CD4-positive, alpha-beta T cell (primary cell): ENCODE measurements at regions of chr1 and their contacts with region 1.

Region 1: GRCh38 chr1:111619635-111620440 is at the start of gene RAP1A:
- DNase-seq: peak; percentile 88 to 98 (median 95)
- ATAC-seq: peak; percentile 75
- H3K4me3 ChIP-seq: peak within 1 kb of the TSS; percentile 81
- H3K4me3 Mint-ChIP-seq: peak within 1 kb of the TSS; percentile 98
- H3K27ac ChIP-seq: peak within 1 kb of the TSS; percentile 76 to 90
- H3K27ac Mint-ChIP-seq: peak within 1 kb of the TSS; percentile 95
- H3K4me1 ChIP-seq: peaks cover 60% of the 10 kb centered on the region
- H3K4me1 Mint-ChIP-seq: peaks cover 82% of the 10 kb centered on the region
- H3K27me3 ChIP-seq: no peaks in the 10 kb centered on the region
- H3K27me3 Mint-ChIP-seq: no peaks in the 10 kb centered on the region
- CTCF ChIP-seq: no peak
- total RNA-seq, gene RAP1A: 63.8 to 67.1 TPM

Region 2: DNA sequence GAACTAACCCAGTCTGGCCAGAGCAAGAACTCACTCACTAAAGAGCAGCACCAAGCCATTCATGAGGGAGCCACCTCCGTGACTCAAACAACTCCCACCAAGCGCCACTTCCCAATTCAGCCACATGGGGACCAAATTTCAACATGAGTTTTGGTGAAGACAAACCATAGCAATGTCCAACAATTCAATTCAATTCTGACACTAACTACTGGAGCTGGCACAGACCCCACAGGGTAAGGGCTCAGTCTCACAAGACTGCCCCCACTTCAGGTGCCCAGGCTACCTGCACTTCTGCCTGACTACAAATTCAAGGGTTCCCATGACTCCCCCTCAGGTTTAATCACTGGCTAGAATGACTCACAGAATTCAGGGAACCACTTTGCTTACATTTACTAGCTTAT is 49.1 kb before region 1 on chr1:
- CTCF ChIA-PET with region 1: no interaction called
- POLR2A ChIA-PET with region 1: no interaction called
- intact Hi-C with region 1: loop called in 1 of 2 experiments (anchors 10 kb)
- DNase-seq: peak; percentile 6 to 64 (median 22)
- ATAC-seq: peak; percentile 64
- H3K4me3 ChIP-seq: no peak overlapping the region
- H3K4me3 Mint-ChIP-seq: no peak overlapping the region
- H3K27ac ChIP-seq: no peak overlapping the region
- H3K27ac Mint-ChIP-seq: no peak overlapping the region
- H3K4me1 ChIP-seq: peaks cover 4% of the 10 kb centered on the region
- H3K4me1 Mint-ChIP-seq: peaks cover 9% of the 10 kb centered on the region
- H3K27me3 ChIP-seq: no peaks in the 10 kb centered on the region
- H3K27me3 Mint-ChIP-seq: no peaks in the 10 kb centered on the region
- CTCF ChIP-seq: peak; percentile 42

Region 3: DNA sequence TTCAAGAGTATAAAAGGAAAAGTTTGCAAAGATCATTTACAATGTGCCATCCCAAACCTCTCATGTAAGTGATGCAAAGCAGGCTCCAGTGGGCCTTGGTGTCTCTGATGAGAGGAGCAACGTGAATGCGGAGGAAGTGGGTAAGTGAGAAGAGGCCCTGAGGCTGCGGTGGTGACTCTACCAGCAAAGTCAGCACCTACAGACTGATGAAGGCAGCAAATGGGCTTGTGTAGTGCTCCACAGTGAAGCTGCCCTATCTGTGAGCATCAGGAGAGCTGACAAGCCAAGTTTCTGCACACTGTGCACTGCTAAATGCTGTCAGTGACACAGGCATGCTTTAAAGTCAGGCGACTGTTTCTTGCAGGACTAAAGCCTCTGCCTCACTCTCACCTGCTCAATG is 15.9 kb before region 1 on chr1:
- CTCF ChIA-PET with region 1: interaction called, 12 read pairs
- POLR2A ChIA-PET with region 1: interaction called, 116 read pairs
- intact Hi-C with region 1: loop called in 1 of 2 experiments (anchors 2 kb)
- DNase-seq: peak; percentile 63 to 91 (median 76)
- ATAC-seq: peak; percentile 98
- H3K4me3 ChIP-seq: no peak overlapping the region
- H3K4me3 Mint-ChIP-seq: peak overlapping the region; percentile 37
- H3K27ac ChIP-seq: peak overlapping the region; percentile 30 to 63
- H3K27ac Mint-ChIP-seq: peak overlapping the region; percentile 84
- H3K4me1 ChIP-seq: peaks cover 74% of the 10 kb centered on the region
- H3K4me1 Mint-ChIP-seq: peaks cover 76% of the 10 kb centered on the region
- H3K27me3 ChIP-seq: no peaks in the 10 kb centered on the region
- H3K27me3 Mint-ChIP-seq: no peaks in the 10 kb centered on the region
- CTCF ChIP-seq: no peak

Region 4: GRCh38 chr1:111656086-111657017 is 36.5 kb after region 1 on chr1:
- CTCF ChIA-PET with region 1: no interaction called
- POLR2A ChIA-PET with region 1: no interaction called
- intact Hi-C with region 1: loop called (anchors 5 kb)
- DNase-seq: peak in 4 of 14 experiments; percentile 36 to 69 (median 57)
- ATAC-seq: no peak
- H3K4me3 ChIP-seq: no peak overlapping the region
- H3K4me3 Mint-ChIP-seq: peak overlapping the region; percentile 18
- H3K27ac ChIP-seq: no peak overlapping the region
- H3K27ac Mint-ChIP-seq: peak overlapping the region; percentile 13
- H3K4me1 ChIP-seq: peaks cover 30% of the 10 kb centered on the region
- H3K4me1 Mint-ChIP-seq: peaks cover 56% of the 10 kb centered on the region
- H3K27me3 ChIP-seq: no peaks in the 10 kb centered on the region
- H3K27me3 Mint-ChIP-seq: no peaks in the 10 kb centered on the region
- CTCF ChIP-seq: peak; percentile 64

Region 5: GRCh38 chr1:111704776-111705175 is 84.9 kb after region 1 on chr1:
- CTCF ChIA-PET with region 1: no interaction called
- POLR2A ChIA-PET with region 1: no interaction called
- intact Hi-C with region 1: no loop called
- DNase-seq: no peak
- ATAC-seq: no peak
- H3K4me3 ChIP-seq: no peak overlapping the region
- H3K4me3 Mint-ChIP-seq: no peak overlapping the region
- H3K27ac ChIP-seq: no peak overlapping the region
- H3K27ac Mint-ChIP-seq: no peak overlapping the region
- H3K4me1 ChIP-seq: no peaks in the 10 kb centered on the region
- H3K4me1 Mint-ChIP-seq: peaks cover 5% of the 10 kb centered on the region
- H3K27me3 ChIP-seq: no peaks in the 10 kb centered on the region
- H3K27me3 Mint-ChIP-seq: no peaks in the 10 kb centered on the region
- CTCF ChIP-seq: no peak